PC-9 (cell line): ENCODE measurements at regions of chr10 and their contacts with region 1.

Region 1: GRCh38 chr10:100009793-100010676 is at the start of gene DNMBP:
- DNase-seq: peak; percentile 59 to 76
- H3K4me3 ChIP-seq: peak within 1 kb of the TSS; percentile 81
- H3K27ac ChIP-seq: peak within 1 kb of the TSS; percentile 93; the same call in 1 of the 2 replicates
- H3K4me1 ChIP-seq: peaks cover 34% of the 10 kb centered on the region
- H3K27me3 ChIP-seq: no peaks in the 10 kb centered on the region
- CTCF ChIP-seq: peak; percentile 58
- total RNA-seq, gene DNMBP: 11.8 and 14.9 TPM in 2 replicates

Region 2: GRCh38 chr10:99930731-99931550 is 79.1 kb before region 1 on chr10:
- CTCF ChIA-PET with region 1: interaction called, 5 read pairs
- POLR2A ChIA-PET with region 1: no interaction called
- intact Hi-C with region 1: loop called (anchors 2 kb)
- DNase-seq: peak; percentile 70 to 96
- H3K4me3 ChIP-seq: peak overlapping the region; percentile 87
- H3K27ac ChIP-seq: peak overlapping the region; percentile 98
- H3K4me1 ChIP-seq: peaks cover 20% of the 10 kb centered on the region
- H3K27me3 ChIP-seq: no peaks in the 10 kb centered on the region
- CTCF ChIP-seq: no peak

Region 3: GRCh38 chr10:99966306-99966705 is 43.7 kb before region 1 on chr10:
- CTCF ChIA-PET with region 1: interaction called, 4 read pairs
- POLR2A ChIA-PET with region 1: no interaction called
- intact Hi-C with region 1: loop called (anchors 5 kb)
- DNase-seq: peak; percentile 59 to 95
- H3K4me3 ChIP-seq: no peak overlapping the region
- H3K27ac ChIP-seq: peak overlapping the region; percentile 81
- H3K4me1 ChIP-seq: peaks cover 35% of the 10 kb centered on the region
- H3K27me3 ChIP-seq: no peaks in the 10 kb centered on the region
- CTCF ChIP-seq: no peak

Region 4: GRCh38 chr10:99976886-99977665 is 33.0 kb before region 1 on chr10:
- CTCF ChIA-PET with region 1: interaction called, 3 read pairs
- POLR2A ChIA-PET with region 1: interaction called, 6 read pairs
- intact Hi-C with region 1: loop called (anchors 2 kb)
- DNase-seq: peak; percentile 29 to 94
- H3K4me3 ChIP-seq: peak overlapping the region; percentile 44
- H3K27ac ChIP-seq: peak overlapping the region; percentile 89
- H3K4me1 ChIP-seq: peaks cover 26% of the 10 kb centered on the region
- H3K27me3 ChIP-seq: no peaks in the 10 kb centered on the region
- CTCF ChIP-seq: no peak

Region 5: GRCh38 chr10:101272229-101272868 is 1262.3 kb after region 1 on chr10:
- CTCF ChIA-PET with region 1: no interaction called
- POLR2A ChIA-PET with region 1: no interaction called
- intact Hi-C with region 1: no loop called
- DNase-seq: peak in 1 of 2 experiments; percentile 58
- H3K4me3 ChIP-seq: no peak overlapping the region
- H3K27ac ChIP-seq: no peak overlapping the region
- H3K4me1 ChIP-seq: no peaks in the 10 kb centered on the region
- H3K27me3 ChIP-seq: no peaks in the 10 kb centered on the region
- CTCF ChIP-seq: peak; percentile 68